GM13977 (cell line): ENCODE measurements at regions of chrX and their contacts with region 1.

Region 1: GRCh38 chrX:54808605-54809483 is 1.3 kb downstream of the MAGED2 start:
- DNase-seq: peak; percentile 94
- CTCF ChIP-seq: no peak

Region 2: GRCh38 chrX:54597728-54598127 is 211.1 kb before region 1 on chrX:
- in situ Hi-C with region 1: no loop called
- DNase-seq: no peak
- CTCF ChIP-seq: no peak

Region 3: DNA sequence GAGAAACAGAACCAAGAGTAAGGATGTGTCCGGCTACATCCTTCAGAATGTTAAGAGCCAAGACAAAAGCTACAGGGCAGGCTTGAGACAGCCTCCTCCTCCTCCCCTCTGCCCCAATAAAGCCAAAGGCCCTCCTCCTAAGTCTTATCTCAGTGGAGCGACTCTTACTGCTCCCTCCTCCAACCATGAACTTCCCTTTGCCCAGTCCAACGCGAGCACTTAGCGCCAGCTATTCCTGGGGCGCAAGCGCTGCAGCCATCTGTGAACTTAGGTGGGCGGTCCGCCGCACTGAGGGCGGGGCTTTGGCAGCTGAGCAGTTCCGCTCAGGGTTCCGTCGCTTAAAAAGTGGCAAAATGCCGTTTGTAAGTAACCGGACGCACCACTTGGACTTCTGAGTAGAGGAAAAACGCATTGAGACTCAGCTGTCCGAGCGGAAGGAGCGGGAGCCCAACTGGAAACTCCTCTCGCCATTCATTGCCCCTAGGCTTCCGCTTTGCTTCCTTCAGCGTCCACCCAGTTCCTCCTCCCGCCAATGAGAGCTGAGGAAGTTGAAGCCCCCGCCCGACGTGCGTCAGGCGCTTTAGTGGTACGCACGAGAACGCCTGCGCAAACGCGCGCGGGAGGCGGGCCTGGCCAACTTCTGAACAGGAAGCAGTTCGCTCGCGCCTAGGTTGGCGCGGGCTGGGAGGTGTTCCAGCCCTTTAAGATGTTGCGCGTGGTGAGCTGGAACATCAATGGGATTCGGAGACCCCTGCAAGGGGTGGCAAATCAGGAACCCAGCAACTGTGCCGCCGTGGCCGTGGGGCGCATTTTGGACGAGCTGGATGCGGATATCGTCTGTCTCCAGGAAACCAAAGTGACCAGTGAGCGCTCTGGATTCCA is 191.1 kb after region 1 on chrX and contains the start of gene APEX2:
- in situ Hi-C with region 1: loop called (anchors 25 kb)
- DNase-seq: peak; percentile 77
- CTCF ChIP-seq: no peak

Region 4: DNA sequence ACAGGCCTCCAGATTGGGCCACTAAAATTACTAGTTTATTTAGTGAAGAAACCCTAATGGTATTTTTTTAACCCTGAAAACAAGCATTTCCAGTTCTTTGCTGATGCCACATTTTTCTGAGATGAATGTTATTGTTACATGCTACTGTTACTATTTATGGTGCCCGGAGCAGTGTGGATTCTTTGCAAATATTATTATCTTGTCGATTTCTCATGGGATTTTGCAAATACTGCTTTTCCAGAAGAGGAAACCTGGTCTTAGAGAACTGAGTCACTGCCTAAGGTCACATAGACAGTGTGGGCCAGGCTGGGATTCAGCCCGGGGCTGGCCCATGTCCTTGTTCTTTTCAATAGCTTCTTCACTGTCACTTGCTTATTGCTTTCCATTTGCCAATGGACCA is 230.7 kb after region 1 on chrX:
- in situ Hi-C with region 1: no loop called
- DNase-seq: no peak
- CTCF ChIP-seq: no peak